Ascending aorta (tissue), 2 donors: ENCODE measurements at regions of chr12 and their contacts with region 1.

Region 1: GRCh38 chr12:28089338-28089737 is 100.9 kb upstream of the CCDC91 start:
- DNase-seq: no peak
- H3K4me3 ChIP-seq: no peak overlapping the region
- H3K27ac ChIP-seq: no peak overlapping the region
- H3K4me1 ChIP-seq: peaks cover 0 to 9% of the 10 kb centered on the region in 2 donors
- H3K27me3 ChIP-seq: no peaks in the 10 kb centered on the region
- CTCF ChIP-seq: no peak

Region 2: GRCh38 chr12:27975244-27976136 is 113.8 kb before region 1 on chr12:
- intact Hi-C with region 1: loop called (anchors 5 kb)
- DNase-seq: no peak
- H3K4me3 ChIP-seq: peak overlapping the region; percentile 46 to 58
- H3K27ac ChIP-seq: no peak overlapping the region
- H3K4me1 ChIP-seq: peaks cover 0 to 2% of the 10 kb centered on the region in 2 donors
- H3K27me3 ChIP-seq: no peaks in the 10 kb centered on the region
- CTCF ChIP-seq: no peak

Region 3: GRCh38 chr12:28130625-28131598 is 41.6 kb after region 1 on chr12:
- intact Hi-C with region 1: loop called (anchors 2 kb)
- DNase-seq: peak; percentile 45 to 91
- H3K4me3 ChIP-seq: no peak overlapping the region
- H3K27ac ChIP-seq: peak overlapping the region; percentile 79 to 87
- H3K4me1 ChIP-seq: peaks cover 0 to 10% of the 10 kb centered on the region in 2 donors
- H3K27me3 ChIP-seq: no peaks in the 10 kb centered on the region
- CTCF ChIP-seq: no peak